HEK293T (cell line): ENCODE measurements at regions of chr4 and their contacts with region 1.

Region 1: DNA sequence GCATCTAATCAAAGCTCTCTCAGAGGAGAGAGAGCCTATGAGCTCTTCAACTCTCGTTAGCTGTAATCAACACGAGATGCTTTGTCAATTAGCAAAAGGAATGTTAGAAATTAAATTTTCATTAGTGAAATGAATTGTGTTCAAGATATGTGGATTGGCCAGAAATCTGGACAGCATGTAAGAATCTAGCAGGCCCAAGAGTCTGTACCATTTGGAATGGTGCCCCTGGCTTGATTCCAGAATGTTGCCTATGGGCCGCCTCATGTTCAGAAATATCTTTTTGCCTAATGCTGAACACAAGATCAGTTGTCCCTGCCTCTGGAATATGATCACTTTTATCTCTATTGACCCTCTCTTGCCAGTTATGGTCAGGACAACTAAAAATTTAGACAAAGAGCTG is 88.2 kb downstream of the RBM46 start:
- DNase-seq: no peak

Region 2: DNA sequence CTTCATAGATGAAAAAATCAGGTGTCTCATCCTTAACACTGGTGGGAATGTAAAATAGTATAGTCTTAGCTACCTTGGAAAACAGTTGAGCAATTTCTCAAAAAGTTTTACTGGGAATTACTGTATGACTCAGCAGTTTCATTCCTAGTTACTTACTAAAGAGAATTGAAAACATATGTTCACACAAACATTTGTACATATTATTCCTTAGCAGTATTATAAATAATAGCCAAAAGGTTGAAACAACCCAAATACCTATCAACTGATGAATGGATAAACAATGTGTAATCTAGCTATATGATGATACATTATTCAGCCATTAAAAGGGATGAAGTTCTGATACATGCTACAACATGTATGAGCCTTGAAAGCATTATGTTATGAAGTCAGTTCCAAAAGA is 46.5 kb before region 1 on chr4:
- CTCF ChIA-PET with region 1: interaction called, 12 read pairs
- POLR2A ChIA-PET with region 1: no interaction called
- DNase-seq: no peak